RWPE1 (cell line): ENCODE measurements at regions of chr2 and their contacts with region 1.

Region 1: DNA sequence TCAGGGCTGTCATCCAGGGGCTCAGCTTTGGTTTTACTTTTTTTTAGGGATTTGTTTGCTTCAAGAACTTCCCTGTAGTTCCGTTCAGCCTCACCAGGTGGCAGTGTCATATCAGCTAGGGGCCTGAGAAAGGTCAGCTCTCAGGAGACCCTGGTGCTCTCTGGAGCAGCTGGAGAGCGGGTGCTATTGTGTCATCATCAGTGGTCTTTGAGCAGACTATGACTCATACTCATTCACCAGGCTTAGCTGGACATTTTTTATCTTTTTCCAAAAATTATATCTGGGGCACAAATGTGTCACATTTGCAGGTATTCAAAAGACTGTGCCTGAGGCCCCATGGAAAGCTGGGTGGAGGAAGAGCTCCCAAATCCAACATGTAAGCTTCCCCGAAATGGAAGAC is 24.4 kb downstream of the ZNF892 start:
- DNase-seq: peak; percentile 72
- H3K27ac ChIP-seq: no peak overlapping the region
- CTCF ChIP-seq: peak; percentile 88

Region 2: GRCh38 chr2:95076784-95077529 is 154.8 kb before region 1 on chr2:
- CTCF ChIA-PET with region 1: no interaction called
- POLR2A ChIA-PET with region 1: no interaction called
- DNase-seq: peak; percentile 76
- H3K27ac ChIP-seq: no peak overlapping the region
- CTCF ChIP-seq: peak; percentile 87

Region 3: GRCh38 chr2:95272299-95272751 is 40.6 kb after region 1 on chr2:
- CTCF ChIA-PET with region 1: interaction called, 40 read pairs
- POLR2A ChIA-PET with region 1: interaction called, 5 read pairs
- DNase-seq: no peak
- H3K27ac ChIP-seq: no peak overlapping the region
- CTCF ChIP-seq: no peak

Region 4: DNA sequence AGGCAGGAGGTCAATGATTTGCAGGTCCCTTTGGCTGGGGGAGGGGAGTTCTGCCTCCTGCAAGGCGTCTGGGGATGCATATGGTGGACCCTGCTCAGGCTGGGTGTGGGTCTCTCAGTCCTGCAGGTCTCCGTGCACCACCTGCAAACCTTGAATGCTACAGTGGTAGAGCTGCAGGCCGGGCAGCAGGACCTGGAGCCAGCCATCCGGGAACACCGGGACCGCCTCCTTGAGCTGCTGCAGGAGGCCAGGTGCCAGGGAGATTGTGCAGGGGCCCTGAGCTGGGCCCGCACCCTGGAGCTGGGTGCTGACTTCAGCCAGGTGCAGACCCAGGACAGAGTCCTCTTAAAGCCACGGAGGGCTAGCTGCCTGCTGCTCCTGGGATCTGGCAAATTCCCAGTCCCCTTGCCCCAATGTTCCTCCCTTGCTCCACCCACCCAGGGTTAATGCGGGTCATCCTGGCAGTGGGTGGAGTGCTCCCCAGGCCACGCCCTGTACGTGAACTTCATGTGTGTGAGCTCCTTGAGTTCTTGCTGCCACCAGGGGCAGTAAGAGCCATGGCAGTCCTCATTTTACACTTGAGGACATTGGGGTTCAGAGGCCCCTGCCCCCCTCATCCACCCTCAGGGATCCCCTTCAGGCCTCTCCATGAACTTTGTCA is 45.7 kb after region 1 on chr2:
- CTCF ChIA-PET with region 1: interaction called, 40 read pairs
- POLR2A ChIA-PET with region 1: interaction called, 5 read pairs
- DNase-seq: peak; percentile 72
- H3K27ac ChIP-seq: peak overlapping the region; percentile 84
- CTCF ChIP-seq: no peak; the same call in 1 of the 2 replicates

Region 5: GRCh38 chr2:95296880-95297487 is 65.3 kb after region 1 on chr2 and contains the start of gene KCNIP3:
- CTCF ChIA-PET with region 1: interaction called, 37 read pairs
- POLR2A ChIA-PET with region 1: no interaction called
- DNase-seq: no peak
- H3K27ac ChIP-seq: peak within 1 kb of the TSS; percentile 19
- CTCF ChIP-seq: no peak

Region 6: DNA sequence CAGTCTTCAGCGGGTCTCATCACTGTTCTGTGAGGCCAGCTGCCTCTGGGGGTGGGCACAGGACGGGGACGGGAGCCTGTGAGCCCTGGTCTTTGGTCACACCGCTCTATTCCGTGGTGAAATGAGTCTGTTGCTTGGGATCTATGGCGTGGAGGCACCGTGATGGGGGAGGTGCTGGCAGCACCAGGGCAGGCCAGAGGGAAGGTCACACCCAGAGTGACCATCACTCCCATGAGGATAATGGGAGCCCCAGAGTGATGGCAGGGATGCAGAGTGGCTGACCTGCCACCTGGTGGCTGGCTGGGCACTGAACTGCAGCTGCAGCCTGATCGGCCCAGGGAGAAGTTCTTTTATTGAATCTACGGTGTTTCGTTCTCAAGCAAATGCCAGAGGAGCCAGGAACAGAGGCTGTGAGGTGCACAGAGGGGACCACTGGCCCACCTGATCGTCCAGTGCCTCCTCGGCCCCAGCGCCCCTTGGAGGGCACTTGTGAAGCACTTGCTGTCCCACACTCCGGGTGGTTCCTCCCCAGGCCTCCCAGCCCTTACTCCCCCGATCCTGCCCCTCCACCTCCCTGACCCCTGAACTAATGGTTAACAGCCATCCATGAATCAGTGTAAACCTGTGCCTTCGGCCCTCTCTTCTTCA is 83.4 kb after region 1 on chr2:
- CTCF ChIA-PET with region 1: interaction called, 62 read pairs
- POLR2A ChIA-PET with region 1: interaction called, 3 read pairs
- DNase-seq: peak; percentile 76
- H3K27ac ChIP-seq: peak overlapping the region; percentile 57
- CTCF ChIP-seq: peak; percentile 53